GM10248 (cell line): ENCODE measurements at regions of chr11 and their contacts with region 1.

Region 1: GRCh38 chr11:86274503-86274902 is 27.5 kb upstream of the HIKESHI start:
- DNase-seq: no peak
- CTCF ChIP-seq: no peak

Region 2: DNA sequence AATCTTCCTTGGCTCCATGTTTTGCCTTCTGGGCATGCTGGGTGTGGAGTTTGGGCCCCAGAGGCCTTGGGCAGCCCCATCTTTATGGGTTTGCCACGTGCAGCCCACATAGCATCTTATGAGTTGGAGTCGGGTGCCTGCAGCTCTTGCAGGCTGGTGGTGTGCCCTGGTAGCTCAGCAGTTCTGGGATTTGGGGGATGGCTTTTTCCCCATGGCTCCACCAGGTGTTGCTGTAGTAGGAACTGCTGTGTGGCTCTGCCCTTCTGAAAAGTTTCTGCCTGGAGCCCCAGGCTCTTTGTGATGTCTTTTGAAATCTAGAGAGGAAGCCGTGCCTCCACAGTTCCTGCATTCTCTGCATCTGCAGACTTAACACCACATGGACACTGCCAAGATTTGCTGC is 13.2 kb before region 1 on chr11:
- CTCF ChIA-PET with region 1: interaction called, 12 read pairs
- POLR2A ChIA-PET with region 1: no interaction called
- DNase-seq: no peak
- CTCF ChIP-seq: no peak